Gastrocnemius medialis (tissue), 4 donors: ENCODE measurements at regions of chr9 and their contacts with region 1.

Region 1: GRCh38 chr9:121201738-121202533 is at the start of gene RAB14:
- DNase-seq: peak; percentile 99 to 100
- ATAC-seq: peak; percentile 95 to 97
- H3K4me3 ChIP-seq: peak within 1 kb of the TSS; percentile 67 to 96 (median 90)
- H3K27ac ChIP-seq: peak within 1 kb of the TSS; percentile 93 to 98 (median 95)
- H3K4me1 ChIP-seq: peaks cover 37 to 41% of the 10 kb centered on the region in 2 donors
- H3K27me3 ChIP-seq: no peaks in the 10 kb centered on the region
- CTCF ChIP-seq: peak; percentile 7 to 58 (median 52)
- POLR2A ChIP-seq: peak; percentile 74 to 78
- total RNA-seq, gene RAB14: 18.7 to 26.8 (median 19.5) TPM

Region 2: GRCh38 chr9:121121582-121122087 is 80.3 kb before region 1 on chr9:
- in situ Hi-C with region 1: no loop called
- intact Hi-C with region 1: loop called (anchors 5 kb)
- DNase-seq: peak; percentile 94 to 98
- ATAC-seq: peak; percentile 100
- H3K4me3 ChIP-seq: peak overlapping the region; percentile 36 to 58 (median 54)
- H3K27ac ChIP-seq: peak overlapping the region; percentile 49 to 74 (median 62)
- H3K4me1 ChIP-seq: peaks cover 9 to 12% of the 10 kb centered on the region in 2 donors
- H3K27me3 ChIP-seq: no peaks in the 10 kb centered on the region
- CTCF ChIP-seq: peak in 4 of 5 experiments; percentile 26 to 66 (median 49)
- POLR2A ChIP-seq: peak; percentile 34 to 68

Region 3: DNA sequence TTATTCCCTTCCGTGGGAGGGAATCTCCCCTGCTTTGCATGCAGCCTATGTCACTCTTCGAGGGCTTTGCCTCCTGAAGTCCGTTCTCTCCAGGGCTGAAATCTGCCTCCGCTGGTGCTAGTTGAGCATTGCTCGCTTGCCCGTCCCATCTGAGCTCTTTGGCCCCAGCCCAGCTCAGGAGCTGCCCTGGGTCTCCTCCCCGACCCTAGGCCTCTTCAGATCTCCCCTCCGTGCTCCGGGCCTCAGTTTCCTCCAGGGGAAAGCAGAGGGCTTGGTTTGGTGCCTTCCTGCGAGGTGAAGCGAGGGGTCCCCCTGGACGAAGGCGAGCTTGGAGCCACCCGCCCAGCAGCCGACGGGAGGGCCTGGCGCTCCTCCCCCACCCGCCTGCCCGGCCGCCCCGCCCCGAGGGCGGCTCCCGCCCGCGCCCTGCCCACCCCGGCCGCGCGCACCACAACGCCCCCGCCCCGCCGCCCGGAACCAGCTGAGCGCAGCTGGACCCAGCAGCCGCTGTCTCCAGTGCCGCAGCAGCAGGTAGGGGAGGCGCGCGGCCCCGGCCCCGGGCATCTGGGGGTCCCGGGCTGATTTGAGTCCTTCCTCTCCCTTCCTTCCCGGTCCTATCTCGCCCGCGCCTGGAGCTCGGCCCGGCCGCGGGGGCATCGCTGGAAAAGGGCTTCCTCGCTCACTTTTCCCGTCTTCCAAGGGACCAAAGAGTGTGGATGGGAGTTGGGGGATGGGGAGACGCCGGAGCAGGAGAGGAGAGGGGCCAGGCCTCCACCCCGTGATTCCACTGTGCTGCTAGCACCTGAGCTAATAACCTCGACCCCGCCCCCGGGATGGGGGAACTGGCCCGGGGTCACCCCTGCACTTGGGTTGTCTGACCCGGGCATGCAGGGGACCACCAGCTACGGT is 66.0 kb after region 1 on chr9 and contains the start of gene GSN:
- in situ Hi-C with region 1: no loop called
- intact Hi-C with region 1: loop called (anchors 5 kb)
- DNase-seq: peak; percentile 58 to 62
- ATAC-seq: peak; percentile 61 to 78
- H3K4me3 ChIP-seq: peak within 1 kb of the TSS; percentile 75 to 95 (median 84)
- H3K27ac ChIP-seq: peak within 1 kb of the TSS; percentile 67 to 81 (median 73)
- H3K4me1 ChIP-seq: peaks cover 38 to 53% of the 10 kb centered on the region in 2 donors
- H3K27me3 ChIP-seq: no peaks in the 10 kb centered on the region
- CTCF ChIP-seq: no peak
- POLR2A ChIP-seq: peak; percentile 78 to 80
- total RNA-seq, gene GSN: 487 to 785 (median 662) TPM

Region 4: DNA sequence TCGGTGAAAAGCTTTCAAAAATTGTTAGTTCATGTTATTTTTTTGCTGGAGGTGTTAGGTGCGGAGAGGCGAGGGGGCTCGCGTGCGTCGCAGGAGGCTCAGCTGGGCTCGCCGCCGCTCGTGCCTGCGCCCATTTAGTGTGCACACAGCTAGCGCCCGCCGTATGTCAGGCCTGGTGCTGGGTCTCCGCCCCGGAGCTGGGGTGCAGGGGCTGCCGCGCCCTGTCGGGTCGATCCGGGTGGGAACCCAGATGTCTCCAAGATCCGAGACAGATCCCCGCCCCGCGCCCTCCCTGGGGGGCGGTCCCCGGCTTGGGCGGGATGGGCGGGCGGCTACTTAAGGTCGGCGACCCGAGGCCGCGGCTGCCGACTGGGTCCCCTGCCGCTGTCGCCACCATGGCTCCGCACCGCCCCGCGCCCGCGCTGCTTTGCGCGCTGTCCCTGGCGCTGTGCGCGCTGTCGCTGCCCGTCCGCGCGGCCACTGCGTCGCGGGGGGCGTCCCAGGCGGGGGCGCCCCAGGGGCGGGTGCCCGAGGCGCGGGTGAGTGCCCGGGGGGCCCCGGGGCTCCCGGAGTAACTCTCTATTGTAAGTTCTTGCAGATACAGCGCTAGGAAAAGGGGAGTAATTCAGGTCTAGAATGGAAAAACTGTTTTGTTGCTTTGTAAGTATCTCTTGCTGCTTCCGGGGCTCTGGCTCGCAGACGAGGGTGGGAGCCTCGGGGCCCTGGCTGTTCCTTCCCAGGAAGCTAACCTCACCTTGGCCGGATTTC is 97.7 kb after region 1 on chr9:
- in situ Hi-C with region 1: loop called in 1 of 4 experiments (anchors 25 kb)
- intact Hi-C with region 1: no loop called
- DNase-seq: peak; percentile 60 to 75
- ATAC-seq: peak; percentile 4 to 16
- H3K4me3 ChIP-seq: peak overlapping the region; percentile 56 to 58 (median 56)
- H3K27ac ChIP-seq: peak overlapping the region; percentile 89 to 95 (median 91)
- H3K4me1 ChIP-seq: peaks cover 54 to 58% of the 10 kb centered on the region in 2 donors
- H3K27me3 ChIP-seq: no peaks in the 10 kb centered on the region
- CTCF ChIP-seq: peak in 1 of 5 experiments; percentile 8
- POLR2A ChIP-seq: peak; percentile 51 to 82

Region 5: GRCh38 chr9:121362813-121363621 is 161.1 kb after region 1 on chr9:
- in situ Hi-C with region 1: no loop called
- intact Hi-C with region 1: no loop called
- DNase-seq: no peak
- ATAC-seq: peak; percentile 45 to 62
- H3K4me3 ChIP-seq: peak overlapping the region in 3 of 4 donors; percentile 10 to 34 (median 13)
- H3K27ac ChIP-seq: peak overlapping the region; percentile 94 to 99 (median 96)
- H3K4me1 ChIP-seq: peaks cover 96 to 97% of the 10 kb centered on the region in 2 donors
- H3K27me3 ChIP-seq: no peaks in the 10 kb centered on the region
- CTCF ChIP-seq: no peak
- POLR2A ChIP-seq: no peak